PC-3 (cell line): ENCODE measurements at regions of chr3 and their contacts with region 1.

Region 1: GRCh38 chr3:58568572-58569286 is 8.5 kb downstream of the FAM107A start:
- DNase-seq: peak; percentile 92
- ATAC-seq: peak; percentile 9
- H3K4me3 ChIP-seq: no peak overlapping the region
- H3K27ac ChIP-seq: no peak overlapping the region
- H3K4me1 ChIP-seq: peaks cover 31% of the 10 kb centered on the region
- H3K27me3 ChIP-seq: no peaks in the 10 kb centered on the region
- CTCF ChIP-seq: peak; percentile 93

Region 2: DNA sequence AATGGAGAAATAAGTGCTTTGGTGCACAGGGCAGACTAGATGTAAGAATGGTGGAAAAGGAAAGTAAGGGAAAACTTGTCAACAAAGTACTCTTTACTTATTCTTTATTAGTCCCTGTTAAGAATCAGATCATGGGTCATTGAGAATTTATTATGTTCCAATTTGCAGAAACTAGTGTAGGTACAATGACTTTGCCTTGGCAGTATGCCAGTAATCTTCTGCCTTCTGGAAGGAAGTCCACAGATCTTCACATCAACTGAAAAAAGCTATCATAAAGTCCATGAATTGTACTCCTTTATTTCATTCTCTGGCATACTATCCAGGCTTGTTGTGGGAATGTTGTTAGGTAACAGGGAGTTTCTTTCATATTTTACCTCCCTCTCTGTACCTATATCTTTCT is 648.7 kb before region 1 on chr3:
- CTCF ChIA-PET with region 1: no interaction called
- POLR2A ChIA-PET with region 1: no interaction called
- intact Hi-C with region 1: no loop called
- DNase-seq: peak; percentile 34
- ATAC-seq: 0 out of 2 replicates have a peak, but pooled peaks have one; percentile 4
- H3K4me3 ChIP-seq: no peak overlapping the region
- H3K27ac ChIP-seq: no peak overlapping the region
- H3K4me1 ChIP-seq: peaks cover 26% of the 10 kb centered on the region
- H3K27me3 ChIP-seq: no peaks in the 10 kb centered on the region
- CTCF ChIP-seq: no peak

Region 3: DNA sequence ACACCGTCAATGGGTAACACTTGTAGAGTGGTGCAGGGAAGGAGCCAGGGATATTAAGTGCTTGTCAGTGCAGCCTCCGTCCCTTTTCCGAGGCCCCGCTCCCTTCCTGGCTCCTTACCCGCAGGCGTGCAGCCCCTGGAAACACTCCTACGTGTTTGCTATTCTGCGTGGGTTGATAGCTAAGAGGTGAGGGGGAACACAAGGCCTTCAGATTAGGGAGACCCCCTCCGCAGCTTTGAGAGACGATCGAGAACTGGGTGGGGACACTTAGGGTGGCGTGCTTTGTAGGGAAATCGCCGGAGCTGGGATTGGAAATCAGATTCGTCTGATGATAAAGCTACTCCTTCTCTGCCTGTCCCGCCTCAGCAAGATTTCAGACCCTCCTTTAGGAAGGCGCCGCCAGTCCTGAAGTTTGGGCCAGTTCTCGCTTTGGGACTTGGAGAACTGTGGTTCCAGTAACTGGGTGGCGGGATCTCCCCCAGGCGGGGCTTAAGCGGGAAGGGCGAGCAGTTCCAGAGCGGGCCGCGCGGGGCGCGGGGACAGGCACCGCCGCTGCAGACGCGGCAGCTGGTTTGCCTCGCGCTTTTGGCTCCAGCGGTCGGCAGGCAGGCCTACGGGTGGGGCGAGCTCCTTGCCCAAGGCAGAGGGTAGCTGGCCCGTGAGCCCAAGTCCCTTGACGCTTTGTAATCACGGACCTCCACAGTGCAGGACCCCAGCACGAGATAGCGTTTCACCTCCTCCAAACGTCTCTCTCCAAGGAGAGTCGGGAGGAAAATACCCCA is 16.5 kb after region 1 on chr3:
- CTCF ChIA-PET with region 1: no interaction called
- POLR2A ChIA-PET with region 1: no interaction called
- intact Hi-C with region 1: loop called (anchors 2 kb)
- DNase-seq: peak; percentile 85
- ATAC-seq: peak; percentile 96
- H3K4me3 ChIP-seq: peak overlapping the region; percentile 87
- H3K27ac ChIP-seq: no peak overlapping the region
- H3K4me1 ChIP-seq: peaks cover 13% of the 10 kb centered on the region; the same call in 1 of the 2 replicates
- H3K27me3 ChIP-seq: no peaks in the 10 kb centered on the region
- CTCF ChIP-seq: peak; percentile 71

Region 4: DNA sequence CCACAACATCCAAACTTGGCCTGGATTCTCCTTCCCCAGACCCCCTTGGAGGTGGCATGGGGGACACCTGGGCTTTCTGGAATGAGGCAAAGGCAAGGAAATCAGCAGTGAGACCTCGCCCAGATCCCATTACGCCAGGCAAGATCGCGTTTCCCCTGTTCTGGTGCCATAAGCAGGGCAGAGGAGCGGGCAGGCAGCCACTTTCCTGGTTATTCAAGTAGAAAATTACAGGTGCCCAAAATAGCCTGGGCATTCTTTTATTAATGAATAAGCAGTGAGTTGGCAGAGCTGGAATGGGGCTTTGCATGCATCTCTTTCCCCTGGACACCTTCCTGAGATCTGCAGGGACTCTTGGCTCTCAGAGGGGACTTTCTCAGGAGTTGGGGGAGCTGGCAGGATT is 39.9 kb after region 1 on chr3:
- CTCF ChIA-PET with region 1: no interaction called
- POLR2A ChIA-PET with region 1: no interaction called
- intact Hi-C with region 1: loop called (anchors 1 kb)
- DNase-seq: peak; percentile 96
- ATAC-seq: peak; percentile 85
- H3K4me3 ChIP-seq: peak overlapping the region; percentile 27; the same call in 1 of the 2 replicates
- H3K27ac ChIP-seq: peak overlapping the region; percentile 98
- H3K4me1 ChIP-seq: peaks cover 34% of the 10 kb centered on the region
- H3K27me3 ChIP-seq: no peaks in the 10 kb centered on the region
- CTCF ChIP-seq: no peak

Region 5: DNA sequence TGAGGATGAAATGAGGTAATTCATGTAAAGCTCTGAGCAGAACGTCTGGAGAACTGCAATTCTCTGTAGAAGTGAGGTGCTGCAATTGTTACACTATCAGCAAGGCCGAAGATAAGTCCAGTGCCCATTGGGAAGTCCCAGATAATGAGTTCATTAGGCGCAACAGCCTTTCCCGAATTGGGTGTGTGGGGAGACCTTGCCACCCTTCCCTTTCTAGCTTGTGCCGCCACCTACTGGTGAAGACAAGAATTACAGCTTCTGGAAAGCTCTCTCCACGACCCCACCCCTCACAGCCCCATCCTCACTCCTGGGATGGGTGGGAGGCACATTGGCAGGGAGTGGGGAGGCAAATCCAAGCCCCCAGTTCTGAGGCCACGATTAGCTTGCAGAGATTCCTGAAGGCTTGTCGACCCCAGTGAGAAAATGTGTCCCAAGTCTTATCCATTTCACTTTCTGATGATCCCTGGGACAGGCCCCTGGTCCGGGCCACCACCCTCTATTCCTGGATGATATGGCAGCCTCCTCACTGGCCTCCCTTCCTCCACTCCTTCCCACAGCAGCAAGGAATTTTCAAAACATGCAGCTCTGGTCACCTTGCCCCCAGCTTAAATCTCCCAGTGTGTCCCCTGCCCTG is 61.5 kb after region 1 on chr3:
- CTCF ChIA-PET with region 1: interaction called, 20 read pairs
- POLR2A ChIA-PET with region 1: interaction called, 5 read pairs
- intact Hi-C with region 1: loop called (anchors 1 kb)
- DNase-seq: peak; percentile 83
- ATAC-seq: peak; percentile 25
- H3K4me3 ChIP-seq: no peak overlapping the region
- H3K27ac ChIP-seq: peak overlapping the region; percentile 97
- H3K4me1 ChIP-seq: peaks cover 34% of the 10 kb centered on the region
- H3K27me3 ChIP-seq: no peaks in the 10 kb centered on the region
- CTCF ChIP-seq: peak; percentile 96

Region 6: GRCh38 chr3:58659051-58659675 is 90.4 kb after region 1 on chr3:
- CTCF ChIA-PET with region 1: interaction called, 8 read pairs
- POLR2A ChIA-PET with region 1: interaction called, 16 read pairs
- intact Hi-C with region 1: no loop called
- DNase-seq: peak; percentile 68
- ATAC-seq: peak; percentile 80
- H3K4me3 ChIP-seq: no peak overlapping the region
- H3K27ac ChIP-seq: no peak overlapping the region
- H3K4me1 ChIP-seq: no peaks in the 10 kb centered on the region
- H3K27me3 ChIP-seq: 0 out of 2 replicates have a peak, but pooled peaks cover 5% of the 10 kb centered on the region
- CTCF ChIP-seq: peak; percentile 66

Region 7: GRCh38 chr3:59101231-59101736 is 532.6 kb after region 1 on chr3:
- CTCF ChIA-PET with region 1: no interaction called
- POLR2A ChIA-PET with region 1: no interaction called
- intact Hi-C with region 1: loop called (anchors 10 kb)
- DNase-seq: peak; percentile 94
- ATAC-seq: peak; percentile 79
- H3K4me3 ChIP-seq: no peak overlapping the region
- H3K27ac ChIP-seq: peak overlapping the region; percentile 81
- H3K4me1 ChIP-seq: peaks cover 32% of the 10 kb centered on the region
- H3K27me3 ChIP-seq: no peaks in the 10 kb centered on the region
- CTCF ChIP-seq: no peak